Naive thymus-derived CD4-positive, alpha-beta T cell (primary cell): ENCODE measurements at regions of chr5 and their contacts with region 1.

Region 1: DNA sequence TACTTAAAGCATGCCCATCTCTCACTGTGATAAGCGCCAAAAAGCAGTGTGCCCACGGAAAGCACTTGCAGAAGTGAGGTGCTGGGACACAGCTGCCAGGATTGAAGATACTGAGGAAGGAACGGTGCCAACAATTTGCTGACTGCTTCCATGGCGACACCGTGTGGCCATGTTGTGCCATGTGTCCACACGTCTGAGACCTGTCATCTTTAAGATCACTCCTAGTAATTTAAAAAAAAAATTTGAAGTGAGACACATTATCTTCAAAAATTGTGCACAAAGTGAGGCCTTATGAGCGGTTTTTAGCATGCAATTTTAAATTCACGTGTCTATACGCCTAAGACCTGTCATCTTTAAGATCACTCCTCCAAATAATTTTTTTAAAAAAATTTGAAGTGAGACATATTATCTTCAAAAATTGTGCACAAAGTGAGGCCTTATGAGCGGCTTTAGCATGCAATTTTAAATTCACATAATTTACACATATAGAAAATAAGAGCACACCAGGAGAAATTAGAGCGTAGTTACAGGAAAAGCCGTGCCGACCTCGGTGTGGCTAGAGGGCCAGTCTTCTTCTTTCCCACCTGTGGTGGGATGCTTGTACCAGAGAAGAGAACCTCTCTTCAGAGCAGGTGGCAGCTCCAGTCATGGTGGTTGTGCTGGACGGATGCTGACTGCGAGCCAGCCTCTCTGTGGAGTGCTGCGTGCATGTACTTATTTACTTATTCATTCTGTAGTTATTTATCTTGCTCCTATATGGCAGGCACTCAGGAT is 21.4 kb upstream of the FLT4 start:
- DNase-seq: peak in 8 of 9 donors; percentile 35 to 61 (median 48)
- ATAC-seq: peak; percentile 75
- H3K4me3 ChIP-seq: no peak overlapping the region
- H3K4me3 Mint-ChIP-seq: peak overlapping the region; percentile 48 to 77 (median 62)
- H3K27ac ChIP-seq: no peak overlapping the region
- H3K27ac Mint-ChIP-seq: peak overlapping the region in 5 of 9 donors; percentile 0 to 79 (median 13)
- H3K4me1 ChIP-seq: no peaks in the 10 kb centered on the region
- H3K4me1 Mint-ChIP-seq: peaks cover 7 to 30% (median 23%) of the 10 kb centered on the region in 7 donors
- H3K27me3 ChIP-seq: no peaks in the 10 kb centered on the region
- H3K27me3 Mint-ChIP-seq: peaks cover 5 to 30% (median 7%) of the 10 kb centered on the region in 5 donors

Region 2: DNA sequence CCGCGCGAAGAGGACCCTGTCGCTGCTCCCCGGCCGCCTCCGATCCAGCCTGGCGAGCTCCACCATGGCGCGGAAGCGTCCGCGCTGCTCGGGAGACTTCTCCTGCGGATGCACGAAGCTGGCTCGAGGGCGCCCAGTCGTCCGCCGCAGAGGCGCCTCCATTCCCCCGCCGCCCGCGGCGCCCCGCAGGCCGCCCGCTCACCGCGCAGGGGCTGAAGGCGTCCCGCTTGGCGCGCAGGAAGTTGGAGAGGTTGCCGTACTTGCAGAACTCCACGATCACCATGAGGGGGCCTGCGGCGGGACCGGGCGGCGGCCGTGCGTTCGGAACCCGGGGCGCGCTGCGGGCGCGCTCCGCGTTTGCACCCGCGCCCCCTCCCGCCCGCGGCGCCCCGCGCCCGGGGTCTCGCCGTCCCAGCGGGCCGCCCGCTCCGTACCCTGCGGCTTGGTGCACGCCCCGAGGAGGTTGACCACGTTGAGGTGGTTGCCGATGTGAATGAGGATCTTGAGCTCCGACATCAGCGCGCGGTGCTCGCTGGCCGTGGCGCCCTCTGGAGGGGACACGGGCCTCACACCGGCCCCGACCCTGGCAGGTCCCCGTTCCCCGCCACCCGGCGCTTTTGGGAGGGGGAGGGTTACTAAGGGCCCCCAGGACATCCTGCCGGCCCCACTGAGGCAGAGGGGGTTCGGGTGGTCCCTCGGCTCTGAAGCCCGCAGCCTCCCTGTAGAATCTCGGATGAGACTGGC is 51.8 kb before region 1 on chr5:
- CTCF ChIA-PET with region 1: no interaction called
- POLR2A ChIA-PET with region 1: no interaction called
- intact Hi-C with region 1: loop called in 1 of 2 experiments (anchors 2 kb)
- DNase-seq: peak in 7 of 9 donors; percentile 20 to 54 (median 42)
- ATAC-seq: peak; percentile 55
- H3K4me3 ChIP-seq: no peak overlapping the region
- H3K4me3 Mint-ChIP-seq: peak overlapping the region in 6 of 10 donors; percentile 29 to 71 (median 54)
- H3K27ac ChIP-seq: no peak overlapping the region
- H3K27ac Mint-ChIP-seq: no peak overlapping the region
- H3K4me1 ChIP-seq: no peaks in the 10 kb centered on the region
- H3K4me1 Mint-ChIP-seq: peaks cover 0 to 11% (median 6%) of the 10 kb centered on the region in 7 donors
- H3K27me3 ChIP-seq: no peaks in the 10 kb centered on the region
- H3K27me3 Mint-ChIP-seq: no peaks in the 10 kb centered on the region

Region 3: GRCh38 chr5:180636403-180637075 is 34.2 kb before region 1 on chr5:
- CTCF ChIA-PET with region 1: no interaction called
- POLR2A ChIA-PET with region 1: no interaction called
- intact Hi-C with region 1: no loop called
- DNase-seq: no peak
- ATAC-seq: no peak
- H3K4me3 ChIP-seq: no peak overlapping the region
- H3K4me3 Mint-ChIP-seq: no peak overlapping the region
- H3K27ac ChIP-seq: no peak overlapping the region
- H3K27ac Mint-ChIP-seq: no peak overlapping the region
- H3K4me1 ChIP-seq: no peaks in the 10 kb centered on the region
- H3K4me1 Mint-ChIP-seq: peaks cover 0 to 11% (median 4%) of the 10 kb centered on the region in 7 donors
- H3K27me3 ChIP-seq: no peaks in the 10 kb centered on the region
- H3K27me3 Mint-ChIP-seq: peaks cover 0 to 6% (median 0%) of the 10 kb centered on the region in 5 donors

Region 4: DNA sequence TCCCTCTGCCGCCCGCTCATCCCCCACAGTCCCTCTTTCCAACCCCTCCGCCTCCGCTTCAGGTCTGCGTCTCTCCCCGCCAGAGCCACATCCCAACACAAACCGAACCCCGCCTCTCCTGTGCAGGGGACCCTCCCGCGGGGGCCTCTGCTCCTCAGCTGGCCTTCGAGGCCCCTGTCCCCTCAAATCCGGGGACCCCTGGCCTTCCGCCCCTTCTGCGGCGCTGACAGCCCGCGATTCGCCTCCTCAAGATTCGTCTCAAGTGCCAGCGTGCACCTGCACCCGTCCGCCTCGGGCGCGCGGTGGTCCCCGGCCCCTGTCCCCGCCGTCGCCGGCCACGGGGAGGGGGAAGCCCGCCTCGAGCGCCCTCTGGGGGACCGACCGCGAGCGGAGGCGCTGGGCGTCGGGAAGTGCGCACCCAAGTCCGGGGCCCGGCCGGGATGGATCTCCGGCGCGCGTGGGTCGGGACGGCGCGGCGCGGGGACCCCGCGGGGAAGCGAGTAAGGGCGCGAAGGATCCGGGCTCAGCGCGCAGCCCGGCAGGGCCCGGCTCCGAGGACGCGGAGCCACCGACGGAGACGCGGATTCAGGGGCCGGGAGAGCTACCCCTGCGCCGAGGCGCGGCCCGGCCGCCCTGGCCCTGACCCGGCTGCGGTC is 22.0 kb before region 1 on chr5:
- CTCF ChIA-PET with region 1: no interaction called
- POLR2A ChIA-PET with region 1: no interaction called
- intact Hi-C with region 1: loop called in 1 of 2 experiments (anchors 1 kb)
- DNase-seq: peak in 1 of 9 donors; percentile 28
- ATAC-seq: peak; percentile 15
- H3K4me3 ChIP-seq: peak overlapping the region; percentile 20
- H3K4me3 Mint-ChIP-seq: peak overlapping the region; percentile 61 to 89 (median 78)
- H3K27ac ChIP-seq: no peak overlapping the region
- H3K27ac Mint-ChIP-seq: peak overlapping the region in 1 of 9 donors; percentile 47
- H3K4me1 ChIP-seq: no peaks in the 10 kb centered on the region
- H3K4me1 Mint-ChIP-seq: peaks cover 9 to 18% (median 12%) of the 10 kb centered on the region in 7 donors
- H3K27me3 ChIP-seq: peaks cover 0 to 4% of the 10 kb centered on the region in 2 donors
- H3K27me3 Mint-ChIP-seq: peaks cover 16 to 47% (median 31%) of the 10 kb centered on the region in 5 donors

Region 5: GRCh38 chr5:180683220-180683922 is 12.6 kb after region 1 on chr5:
- CTCF ChIA-PET with region 1: interaction called, 10 read pairs
- POLR2A ChIA-PET with region 1: interaction called, 5 read pairs
- intact Hi-C with region 1: loop called in 1 of 2 experiments (anchors 1 kb)
- DNase-seq: peak in 1 of 9 donors; percentile 23
- ATAC-seq: no peak
- H3K4me3 ChIP-seq: no peak overlapping the region
- H3K4me3 Mint-ChIP-seq: peak overlapping the region in 9 of 10 donors; percentile 36 to 77 (median 65)
- H3K27ac ChIP-seq: peak overlapping the region; percentile 46
- H3K27ac Mint-ChIP-seq: peak overlapping the region in 8 of 9 donors; percentile 81 to 98 (median 92)
- H3K4me1 ChIP-seq: peaks cover 5 to 48% of the 10 kb centered on the region in 2 donors
- H3K4me1 Mint-ChIP-seq: peaks cover 4 to 59% (median 46%) of the 10 kb centered on the region in 7 donors
- H3K27me3 ChIP-seq: no peaks in the 10 kb centered on the region
- H3K27me3 Mint-ChIP-seq: peaks cover 0 to 2% (median 0%) of the 10 kb centered on the region in 5 donors

Region 6: DNA sequence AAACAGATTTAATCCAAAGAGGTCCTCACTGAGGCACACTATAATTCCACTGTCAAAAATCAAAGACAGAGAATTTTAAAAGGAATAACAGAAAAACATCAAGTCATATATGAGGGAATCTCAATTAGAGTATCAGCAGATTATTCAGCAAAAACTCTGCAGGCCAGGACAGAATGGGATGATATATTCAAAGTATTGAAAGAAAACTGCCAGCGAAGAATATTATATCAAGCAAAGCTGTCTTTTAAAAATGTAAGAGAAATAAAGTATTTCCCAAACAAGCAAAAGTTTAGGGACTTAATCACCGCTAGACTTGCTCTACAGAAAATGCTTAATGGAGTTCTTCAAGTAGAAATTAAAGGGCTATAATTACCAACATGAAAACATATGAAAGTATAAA is 84.8 kb after region 1 on chr5:
- CTCF ChIA-PET with region 1: no interaction called
- POLR2A ChIA-PET with region 1: no interaction called
- intact Hi-C with region 1: no loop called
- DNase-seq: no peak
- ATAC-seq: no peak
- H3K4me3 ChIP-seq: no peak overlapping the region
- H3K4me3 Mint-ChIP-seq: no peak overlapping the region
- H3K27ac ChIP-seq: no peak overlapping the region
- H3K27ac Mint-ChIP-seq: no peak overlapping the region
- H3K4me1 ChIP-seq: no peaks in the 10 kb centered on the region
- H3K4me1 Mint-ChIP-seq: no peaks in the 10 kb centered on the region
- H3K27me3 ChIP-seq: no peaks in the 10 kb centered on the region
- H3K27me3 Mint-ChIP-seq: peaks cover 11 to 27% (median 17%) of the 10 kb centered on the region in 5 donors